ENCODE measurements at regions of chr14 and their contacts with region 1.

Region 1: DNA sequence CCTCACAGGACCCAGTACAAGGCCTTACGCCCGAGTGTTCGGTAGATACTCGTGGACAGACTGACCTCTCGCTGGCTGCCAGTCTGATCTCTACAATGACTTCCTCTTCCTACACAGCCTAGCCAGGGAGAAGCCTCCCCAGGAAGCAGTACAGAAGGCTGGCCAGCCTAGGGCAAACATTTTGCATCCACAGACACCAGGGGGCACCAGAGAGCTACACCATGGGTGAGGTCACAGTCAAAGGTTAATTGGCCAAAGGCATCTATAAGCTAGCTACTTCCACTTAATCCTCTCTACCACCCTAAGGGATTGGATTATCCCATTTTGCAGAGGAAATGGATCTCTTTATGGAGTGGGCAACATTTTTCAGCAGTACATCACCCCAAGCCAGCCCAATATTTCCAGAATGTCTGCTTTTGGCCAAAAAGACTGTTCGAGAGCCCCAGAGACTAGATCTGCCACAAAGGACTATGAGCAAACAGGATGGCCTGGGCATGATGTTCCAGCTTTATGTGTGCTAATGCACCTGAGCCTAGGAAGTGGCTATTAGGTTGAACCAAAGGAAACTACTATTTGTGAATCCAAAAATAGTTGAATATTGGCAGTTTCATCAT is 14.6 kb upstream of the PNMA1 start:
- DNase-seq: peak; percentile 72 to 93 (median 88)
- ATAC-seq: peak; percentile 84 to 92 (median 88)
- H3K4me3 ChIP-seq: no peak overlapping the region
- H3K27ac ChIP-seq: peak overlapping the region in 1 of 4 donors; percentile 41
- H3K4me1 ChIP-seq: no peaks in the 10 kb centered on the region
- H3K27me3 ChIP-seq: no peaks in the 10 kb centered on the region
- CTCF ChIP-seq: peak; percentile 90 to 92 (median 91)

Region 2: GRCh38 chr14:73825551-73826188 is 96.8 kb after region 1 on chr14:
- intact Hi-C with region 1: loop called in 2 of 3 experiments (anchors 5 kb)
- DNase-seq: peak; percentile 82 to 97 (median 93)
- ATAC-seq: peak; percentile 98 to 100 (median 100)
- H3K4me3 ChIP-seq: no peak overlapping the region
- H3K27ac ChIP-seq: no peak overlapping the region
- H3K4me1 ChIP-seq: peaks cover 0 to 4% (median 0%) of the 10 kb centered on the region in 3 donors
- H3K27me3 ChIP-seq: no peaks in the 10 kb centered on the region
- CTCF ChIP-seq: peak; percentile 74 to 93 (median 82)

Measured in pancreas (tissue), 10 donors.